ENCODE measurements at regions of chr13 and their contacts with region 1.

Region 1: GRCh38 chr13:51797664-51798488 is 6.1 kb downstream of the DHRS12 start:
- DNase-seq: peak; percentile 74
- ATAC-seq: peak; percentile 59
- H3K4me3 Mint-ChIP-seq: no peak overlapping the region
- H3K27ac Mint-ChIP-seq: no peak overlapping the region
- H3K4me1 Mint-ChIP-seq: peaks cover 35% of the 10 kb centered on the region
- H3K27me3 Mint-ChIP-seq: no peaks in the 10 kb centered on the region

Region 2: DNA sequence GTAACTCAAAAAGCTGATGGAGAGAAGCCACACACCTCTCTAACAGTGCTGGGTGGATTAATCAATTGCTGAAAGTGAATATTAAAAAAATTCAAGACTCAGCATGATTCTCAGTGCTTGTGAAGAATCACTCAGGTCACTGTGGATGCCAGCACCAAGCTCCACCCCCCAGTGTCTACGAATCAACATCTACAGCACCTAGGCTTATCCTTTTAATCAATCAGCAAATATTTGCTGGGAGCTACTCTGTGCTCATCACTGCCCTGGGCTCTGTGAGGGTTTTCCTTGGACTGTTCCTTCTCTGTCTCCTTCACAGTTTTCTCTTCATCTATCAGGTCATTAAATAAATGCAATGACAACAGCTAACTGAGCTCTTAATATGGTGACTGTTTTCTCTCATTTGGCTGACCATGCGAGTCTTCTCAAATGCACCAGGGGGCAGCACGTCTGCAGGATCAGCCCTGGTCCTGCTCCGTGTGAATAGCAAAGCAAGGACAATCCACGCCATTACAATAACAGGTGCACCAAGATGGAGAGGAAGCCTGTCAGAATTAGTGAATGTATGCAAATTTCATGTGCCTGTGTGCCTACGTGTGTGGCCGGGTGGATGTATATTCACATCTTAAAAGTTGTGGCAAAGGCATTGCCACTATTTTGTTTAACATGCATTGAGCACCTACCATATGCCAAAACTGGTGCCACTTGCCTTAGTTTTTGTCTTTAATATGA is 672.2 kb before region 1 on chr13:
- CTCF ChIA-PET with region 1: interaction called, 11 read pairs
- DNase-seq: peak; percentile 63
- ATAC-seq: peak; percentile 77
- H3K4me3 Mint-ChIP-seq: no peak overlapping the region
- H3K27ac Mint-ChIP-seq: no peak overlapping the region
- H3K4me1 Mint-ChIP-seq: peaks cover 12% of the 10 kb centered on the region
- H3K27me3 Mint-ChIP-seq: peaks cover 30% of the 10 kb centered on the region

Region 3: GRCh38 chr13:51286135-51287002 is 511.5 kb before region 1 on chr13:
- CTCF ChIA-PET with region 1: interaction called, 25 read pairs
- DNase-seq: peak; percentile 82
- ATAC-seq: peak; percentile 92
- H3K4me3 Mint-ChIP-seq: no peak overlapping the region
- H3K27ac Mint-ChIP-seq: no peak overlapping the region
- H3K4me1 Mint-ChIP-seq: peaks cover 18% of the 10 kb centered on the region
- H3K27me3 Mint-ChIP-seq: peaks cover 3% of the 10 kb centered on the region

Region 4: GRCh38 chr13:51435002-51435578 is 362.8 kb before region 1 on chr13:
- CTCF ChIA-PET with region 1: interaction called, 12 read pairs
- DNase-seq: no peak
- ATAC-seq: no peak
- H3K4me3 Mint-ChIP-seq: no peak overlapping the region
- H3K27ac Mint-ChIP-seq: no peak overlapping the region
- H3K4me1 Mint-ChIP-seq: peaks cover 12% of the 10 kb centered on the region
- H3K27me3 Mint-ChIP-seq: no peaks in the 10 kb centered on the region

Region 5: GRCh38 chr13:51444922-51445321 is 353.0 kb before region 1 on chr13:
- CTCF ChIA-PET with region 1: interaction called, 35 read pairs
- DNase-seq: no peak
- ATAC-seq: no peak
- H3K4me3 Mint-ChIP-seq: no peak overlapping the region
- H3K27ac Mint-ChIP-seq: no peak overlapping the region
- H3K4me1 Mint-ChIP-seq: peaks cover 13% of the 10 kb centered on the region
- H3K27me3 Mint-ChIP-seq: no peaks in the 10 kb centered on the region

Region 6: DNA sequence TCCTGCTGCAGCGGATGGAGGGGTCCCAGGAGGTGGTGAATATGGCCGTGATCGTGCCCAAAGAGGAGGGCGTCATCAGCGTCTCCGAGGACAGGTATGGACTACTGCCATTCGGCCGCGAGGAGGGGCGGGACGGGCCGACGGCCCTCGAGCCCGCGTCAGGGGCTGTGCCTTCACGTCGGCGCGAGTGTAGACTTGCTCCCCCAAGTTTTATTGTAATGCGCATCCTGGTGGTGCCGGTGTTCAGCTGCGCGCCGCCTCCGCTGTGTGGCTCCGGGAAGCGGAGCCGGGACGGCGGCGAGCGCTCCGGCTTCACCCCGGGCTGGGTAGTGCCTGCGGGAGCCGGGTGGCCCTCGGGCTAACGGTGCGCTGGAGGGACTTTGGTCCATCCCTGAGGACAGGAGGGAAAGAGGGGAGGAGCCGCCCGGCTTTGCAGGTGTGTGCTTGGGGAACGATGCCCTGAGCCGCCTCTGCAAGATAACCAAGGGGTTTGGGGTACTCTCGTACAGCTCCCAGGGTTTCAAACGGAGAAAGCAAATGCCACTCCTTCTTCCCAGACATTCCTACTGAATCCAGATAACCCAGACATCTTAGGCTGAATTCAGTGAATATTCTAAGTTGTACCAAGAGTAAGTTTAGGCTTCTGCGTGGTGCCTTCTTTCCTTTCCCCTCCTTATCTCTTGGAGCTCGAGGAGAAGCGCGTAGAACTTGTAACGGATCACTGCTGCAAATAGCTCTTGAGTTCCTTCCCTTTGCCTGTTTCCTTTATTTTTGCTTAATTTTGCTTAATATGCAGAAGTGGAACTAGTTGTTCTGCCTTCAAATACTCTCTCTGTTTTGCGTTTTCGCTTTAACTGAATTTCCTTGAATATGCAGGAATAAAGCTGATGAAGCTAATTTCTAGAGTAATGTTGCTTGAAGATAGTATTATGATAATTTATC is 212.9 kb before region 1 on chr13:
- CTCF ChIA-PET with region 1: interaction called, 12 read pairs
- DNase-seq: peak; percentile 86
- ATAC-seq: peak; percentile 55
- H3K4me3 Mint-ChIP-seq: peak overlapping the region; percentile 90
- H3K27ac Mint-ChIP-seq: peak overlapping the region; percentile 95
- H3K4me1 Mint-ChIP-seq: peaks cover 22% of the 10 kb centered on the region
- H3K27me3 Mint-ChIP-seq: no peaks in the 10 kb centered on the region

Region 7: GRCh38 chr13:51689663-51689996 is 108.2 kb before region 1 on chr13:
- CTCF ChIA-PET with region 1: no interaction called
- DNase-seq: no peak
- ATAC-seq: no peak
- H3K4me3 Mint-ChIP-seq: no peak overlapping the region
- H3K27ac Mint-ChIP-seq: no peak overlapping the region
- H3K4me1 Mint-ChIP-seq: peaks cover 2% of the 10 kb centered on the region
- H3K27me3 Mint-ChIP-seq: no peaks in the 10 kb centered on the region

Region 8: GRCh38 chr13:51704399-51705313 is 93.2 kb before region 1 on chr13:
- CTCF ChIA-PET with region 1: no interaction called
- DNase-seq: no peak
- ATAC-seq: no peak
- H3K4me3 Mint-ChIP-seq: no peak overlapping the region
- H3K27ac Mint-ChIP-seq: no peak overlapping the region
- H3K4me1 Mint-ChIP-seq: no peaks in the 10 kb centered on the region
- H3K27me3 Mint-ChIP-seq: no peaks in the 10 kb centered on the region

Region 9: DNA sequence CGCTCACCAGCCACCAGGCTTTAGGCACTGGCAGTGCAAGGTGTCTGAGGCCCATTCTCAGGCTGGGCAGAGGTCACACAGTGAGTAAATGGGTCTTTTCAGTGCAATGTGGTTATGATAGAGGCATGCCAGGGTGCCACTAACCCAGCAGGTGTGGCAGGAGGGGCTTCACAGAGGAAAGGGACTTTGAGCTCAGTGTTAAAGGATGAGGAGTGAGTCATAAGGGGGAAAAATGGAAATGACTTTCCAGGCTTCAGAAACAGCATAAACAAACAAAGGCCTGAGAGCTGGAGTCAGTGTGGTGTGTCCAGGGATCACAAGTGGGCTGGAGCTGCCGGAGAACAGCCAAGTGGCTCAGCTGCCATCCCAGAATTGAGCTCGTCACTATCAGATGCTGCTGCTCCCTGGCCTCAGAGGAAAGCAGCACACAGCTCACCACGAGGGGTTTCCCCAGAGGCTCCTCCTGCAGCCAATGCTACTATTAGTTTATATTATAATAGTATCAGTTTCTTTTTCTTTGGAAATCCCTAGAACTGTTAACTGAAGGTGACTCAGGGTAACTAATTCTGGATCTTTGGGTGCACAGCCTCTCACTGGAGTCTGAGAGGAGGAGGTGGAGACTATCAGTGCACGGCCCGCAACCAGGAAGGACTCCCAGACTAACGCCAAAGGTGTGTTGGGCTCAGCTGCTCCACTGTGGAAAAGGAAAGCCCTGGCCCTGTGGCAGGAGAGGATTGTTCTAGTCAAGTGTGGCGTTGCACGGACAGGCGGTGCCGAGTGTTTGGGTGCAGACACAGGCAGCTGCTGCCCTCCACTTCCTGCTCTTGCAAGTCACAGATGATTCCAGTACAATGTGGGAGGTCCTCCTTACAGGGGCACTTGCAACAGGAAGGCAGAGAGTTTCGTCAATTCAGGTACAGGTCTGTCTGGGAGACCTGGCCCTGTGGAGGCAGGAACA is 33.4 kb before region 1 on chr13:
- CTCF ChIA-PET with region 1: interaction called, 12 read pairs
- DNase-seq: peak; percentile 71
- ATAC-seq: peak; percentile 85
- H3K4me3 Mint-ChIP-seq: peak overlapping the region; percentile 70
- H3K27ac Mint-ChIP-seq: peak overlapping the region; percentile 90
- H3K4me1 Mint-ChIP-seq: peaks cover 16% of the 10 kb centered on the region
- H3K27me3 Mint-ChIP-seq: no peaks in the 10 kb centered on the region

Region 10: DNA sequence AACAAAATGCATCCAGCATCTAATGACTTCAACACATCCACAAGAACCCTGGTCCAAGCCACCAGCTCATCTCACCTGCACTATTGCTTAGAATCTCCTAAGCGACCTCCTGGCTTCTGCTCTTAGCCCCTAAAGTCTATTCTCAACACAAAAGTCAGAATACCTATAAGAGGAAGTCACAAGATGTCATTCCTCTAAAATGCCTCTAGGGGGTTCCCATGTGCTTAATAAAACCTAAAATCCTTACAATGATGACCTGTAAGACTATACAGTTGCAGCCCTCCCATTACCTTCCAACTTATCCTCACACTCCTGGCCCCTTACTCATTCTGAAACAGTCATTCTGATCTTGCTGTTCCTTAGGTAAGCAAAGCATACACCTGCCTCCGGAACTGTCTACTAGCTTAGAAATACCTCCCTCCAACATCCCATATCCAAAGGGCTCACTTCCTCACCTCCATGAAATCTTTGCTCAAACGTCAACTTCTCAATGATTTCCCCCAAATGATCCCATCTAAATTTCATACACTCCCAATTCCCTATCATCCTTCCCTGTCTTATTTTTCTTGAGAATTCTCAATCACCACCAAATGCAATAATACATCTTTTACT is 203.3 kb after region 1 on chr13:
- CTCF ChIA-PET with region 1: no interaction called
- DNase-seq: no peak
- ATAC-seq: peak; percentile 82
- H3K4me3 Mint-ChIP-seq: no peak overlapping the region
- H3K27ac Mint-ChIP-seq: no peak overlapping the region
- H3K4me1 Mint-ChIP-seq: peaks cover under 1% of the 10 kb centered on the region
- H3K27me3 Mint-ChIP-seq: peaks cover 23% of the 10 kb centered on the region

Region 11: DNA sequence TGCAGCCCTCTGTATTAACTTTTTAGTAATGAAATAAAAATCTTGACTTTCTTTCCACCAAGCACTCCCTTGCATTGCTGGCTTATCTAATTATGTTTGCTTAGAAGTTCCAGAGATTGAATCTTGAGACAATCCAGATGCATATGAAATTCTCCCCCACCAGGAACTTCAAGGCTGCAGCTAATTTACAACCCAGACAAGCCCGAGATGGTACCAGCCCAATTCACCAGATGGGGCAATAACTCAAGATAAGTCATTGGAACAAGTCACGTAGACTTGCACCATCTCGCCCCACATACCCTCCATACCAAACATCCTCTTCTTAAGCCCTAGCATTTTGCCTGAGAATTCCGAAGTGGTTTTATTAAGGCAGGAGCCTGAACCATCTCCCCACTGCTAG is 255.6 kb after region 1 on chr13:
- CTCF ChIA-PET with region 1: no interaction called
- DNase-seq: no peak
- ATAC-seq: no peak
- H3K4me3 Mint-ChIP-seq: no peak overlapping the region
- H3K27ac Mint-ChIP-seq: no peak overlapping the region
- H3K4me1 Mint-ChIP-seq: no peaks in the 10 kb centered on the region
- H3K27me3 Mint-ChIP-seq: peaks cover 5% of the 10 kb centered on the region

Measured in activated CD8-positive, alpha-beta memory T cell treated with anti-CD3 and anti-CD28 coated beads, Interleukin-2, amount 10 ng/mL, durations not matched to agents 7 days and 5 days (primary cell).